Activated T-helper 1 cell treated with anti-CD3 and anti-CD28 coated beads, Interleukin-12 subunit alpha, Interleukin-12 subunit beta, Interleukin-2, Interleukin-4 antibody, amounts not matched to agents 30 ng/mL and 10 ng/mL and 1 ng/mL, durations not matched to agents 14 hours and 24 hours and 36 hours (primary cell): ENCODE measurements at regions of chr1 and their contacts with region 1.

Region 1: GRCh38 chr1:184163674-184164465 is 112.3 kb downstream of the TSEN15 start:
- DNase-seq: peak; percentile 20
- H3K4me3 Mint-ChIP-seq: no peak overlapping the region
- H3K27ac Mint-ChIP-seq: no peak overlapping the region
- H3K4me1 Mint-ChIP-seq: peaks cover 24% of the 10 kb centered on the region
- H3K27me3 Mint-ChIP-seq: peaks cover 12% of the 10 kb centered on the region

Region 2: GRCh38 chr1:182301467-182302198 is 1862.2 kb before region 1 on chr1:
- intact Hi-C with region 1: loop called (anchors 5 kb)
- DNase-seq: peak; percentile 9
- H3K4me3 Mint-ChIP-seq: peak overlapping the region; percentile 37
- H3K27ac Mint-ChIP-seq: peak overlapping the region; percentile 88
- H3K4me1 Mint-ChIP-seq: peaks cover 51% of the 10 kb centered on the region
- H3K27me3 Mint-ChIP-seq: no peaks in the 10 kb centered on the region

Region 3: GRCh38 chr1:183827801-183828200 is 336.1 kb before region 1 on chr1:
- intact Hi-C with region 1: no loop called
- DNase-seq: no peak
- H3K4me3 Mint-ChIP-seq: no peak overlapping the region
- H3K27ac Mint-ChIP-seq: no peak overlapping the region
- H3K4me1 Mint-ChIP-seq: no peaks in the 10 kb centered on the region
- H3K27me3 Mint-ChIP-seq: no peaks in the 10 kb centered on the region

Region 4: GRCh38 chr1:183841950-183842794 is 321.7 kb before region 1 on chr1:
- intact Hi-C with region 1: loop called (anchors 2 kb)
- DNase-seq: peak; percentile 20
- H3K4me3 Mint-ChIP-seq: peak overlapping the region; percentile 71
- H3K27ac Mint-ChIP-seq: peak overlapping the region; percentile 89
- H3K4me1 Mint-ChIP-seq: peaks cover 33% of the 10 kb centered on the region
- H3K27me3 Mint-ChIP-seq: no peaks in the 10 kb centered on the region

Region 5: DNA sequence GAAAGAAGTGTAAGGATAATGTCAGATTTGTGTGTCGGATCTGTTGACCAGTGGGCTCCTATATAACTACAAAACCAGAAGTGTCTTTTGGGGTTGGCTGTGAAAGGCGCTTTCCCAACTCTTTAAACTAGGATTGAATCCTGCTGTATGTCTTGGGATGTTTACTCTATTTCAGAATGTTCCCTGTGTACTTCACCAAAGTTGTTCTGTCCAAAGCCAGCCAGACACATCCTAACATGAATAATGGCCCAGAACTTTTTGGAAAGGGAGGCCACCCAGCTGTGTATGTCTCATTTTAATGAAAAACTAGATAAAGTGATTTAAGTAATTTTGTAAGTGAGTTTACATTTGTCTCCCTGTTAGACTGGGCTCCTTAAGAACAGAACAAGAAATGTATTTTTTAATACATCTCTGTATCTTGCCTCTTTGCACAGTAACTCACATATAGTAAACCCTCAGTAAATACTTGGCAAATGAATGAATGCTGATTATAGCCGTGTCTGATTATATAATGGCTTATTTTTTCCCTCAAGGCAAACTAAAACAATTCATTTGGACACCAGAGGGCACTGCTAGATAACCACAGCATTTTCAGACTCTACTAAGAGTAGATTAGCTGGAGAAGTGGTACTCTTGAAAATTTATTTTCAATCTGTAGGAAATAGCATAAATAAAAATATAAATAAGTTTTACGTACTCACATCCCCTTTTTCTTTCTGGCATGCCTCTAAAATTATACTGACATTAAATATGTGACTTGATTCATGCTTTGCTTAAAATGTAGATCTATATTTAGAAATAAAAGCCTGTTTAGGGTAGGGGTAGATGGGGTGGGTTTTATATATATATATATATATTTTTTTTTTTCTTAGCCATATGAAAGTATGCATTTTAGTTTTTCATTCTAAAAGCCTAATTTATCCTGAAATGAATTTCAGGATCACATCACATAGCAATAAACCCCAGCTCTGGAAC is 88.5 kb before region 1 on chr1:
- intact Hi-C with region 1: loop called (anchors 1 kb)
- DNase-seq: no peak
- H3K4me3 Mint-ChIP-seq: no peak overlapping the region
- H3K27ac Mint-ChIP-seq: no peak overlapping the region
- H3K4me1 Mint-ChIP-seq: peaks cover 19% of the 10 kb centered on the region
- H3K27me3 Mint-ChIP-seq: no peaks in the 10 kb centered on the region

Region 6: GRCh38 chr1:184260382-184260781 is 96.5 kb after region 1 on chr1:
- intact Hi-C with region 1: no loop called
- DNase-seq: no peak
- H3K4me3 Mint-ChIP-seq: no peak overlapping the region
- H3K27ac Mint-ChIP-seq: no peak overlapping the region
- H3K4me1 Mint-ChIP-seq: no peaks in the 10 kb centered on the region
- H3K27me3 Mint-ChIP-seq: peaks cover 14% of the 10 kb centered on the region

Region 7: GRCh38 chr1:184494929-184495328 is 331.1 kb after region 1 on chr1:
- intact Hi-C with region 1: loop called (anchors 1 kb)
- DNase-seq: no peak
- H3K4me3 Mint-ChIP-seq: no peak overlapping the region
- H3K27ac Mint-ChIP-seq: no peak overlapping the region
- H3K4me1 Mint-ChIP-seq: peaks cover 20% of the 10 kb centered on the region
- H3K27me3 Mint-ChIP-seq: peaks cover 2% of the 10 kb centered on the region

Region 8: DNA sequence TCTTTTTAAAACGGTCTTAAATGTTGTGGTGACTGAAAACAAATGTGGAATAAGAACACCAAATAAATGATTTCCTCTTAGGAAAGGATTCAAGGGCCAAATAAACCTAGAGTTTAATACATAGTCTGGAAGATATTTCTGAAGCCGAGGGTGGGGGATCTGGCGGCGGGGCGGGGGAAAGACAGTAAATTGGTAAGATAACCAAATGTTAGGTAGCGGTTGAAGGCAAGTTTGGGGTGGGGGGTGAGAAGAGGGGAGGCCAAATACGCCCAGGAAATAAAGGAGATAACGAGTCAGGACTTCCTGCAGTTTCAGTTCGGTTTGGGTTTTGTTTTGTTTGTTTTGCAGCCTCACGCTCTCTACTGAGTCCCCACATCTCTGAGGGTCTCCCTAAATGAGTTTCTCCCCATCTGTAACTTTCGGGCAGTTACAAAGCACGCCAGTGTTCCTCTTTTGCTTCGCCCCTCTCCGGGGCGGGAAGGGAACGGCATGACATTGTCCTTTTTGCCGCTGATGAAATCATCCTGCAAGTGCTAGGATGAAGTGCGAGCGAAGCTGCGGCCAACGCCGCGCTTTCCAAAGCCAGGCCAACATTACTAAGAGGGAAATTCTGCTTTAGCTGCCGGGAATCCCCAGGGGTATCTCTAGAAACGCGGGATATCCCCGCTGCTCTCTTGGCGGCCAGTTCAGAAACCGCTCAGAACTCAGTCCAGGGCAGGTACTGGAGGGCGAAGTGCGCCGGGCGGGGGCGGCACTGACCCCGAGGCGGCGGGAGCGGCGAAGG is 809.6 kb after region 1 on chr1:
- intact Hi-C with region 1: loop called (anchors 1 kb)
- DNase-seq: no peak
- H3K4me3 Mint-ChIP-seq: peak overlapping the region; percentile 90
- H3K27ac Mint-ChIP-seq: peak overlapping the region; percentile 95
- H3K4me1 Mint-ChIP-seq: peaks cover 67% of the 10 kb centered on the region
- H3K27me3 Mint-ChIP-seq: peaks cover 15% of the 10 kb centered on the region